Transverse colon (tissue), 4 donors: ENCODE measurements at regions of chr1 and their contacts with region 1.

Region 1: DNA sequence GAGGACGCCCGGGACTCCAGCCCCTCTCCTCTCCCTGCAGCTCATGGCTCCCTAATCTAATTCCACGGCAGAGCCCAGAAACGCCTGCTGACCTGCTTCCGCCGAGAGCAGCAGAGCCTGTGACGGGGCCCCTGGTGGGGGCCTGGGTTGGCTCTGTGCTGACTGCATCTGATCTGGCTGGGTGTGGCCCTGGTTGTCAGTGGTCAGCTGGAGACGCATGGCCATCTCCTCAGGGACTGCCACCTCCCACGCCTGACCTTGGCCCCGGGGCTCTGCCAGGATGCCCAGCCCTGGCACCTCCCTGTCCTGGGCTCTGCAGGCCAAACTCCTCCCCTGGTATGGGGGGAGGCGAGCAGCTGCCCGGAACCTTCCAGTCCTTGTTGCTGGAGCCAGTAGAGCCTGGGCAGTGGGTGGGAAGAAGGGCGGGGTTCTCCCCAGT is 1.1 kb upstream of the PLCH2 start:
- DNase-seq: no peak
- H3K4me3 ChIP-seq: no peak overlapping the region
- H3K27ac ChIP-seq: no peak overlapping the region
- H3K4me1 ChIP-seq: peaks cover 0 to 11% (median 9%) of the 10 kb centered on the region in 4 donors
- H3K27me3 ChIP-seq: peaks cover 7% of the 10 kb centered on the region
- CTCF ChIP-seq: no peak
- EP300 ChIP-seq: no peak
- POLR2A ChIP-seq: no peak

Region 2: DNA sequence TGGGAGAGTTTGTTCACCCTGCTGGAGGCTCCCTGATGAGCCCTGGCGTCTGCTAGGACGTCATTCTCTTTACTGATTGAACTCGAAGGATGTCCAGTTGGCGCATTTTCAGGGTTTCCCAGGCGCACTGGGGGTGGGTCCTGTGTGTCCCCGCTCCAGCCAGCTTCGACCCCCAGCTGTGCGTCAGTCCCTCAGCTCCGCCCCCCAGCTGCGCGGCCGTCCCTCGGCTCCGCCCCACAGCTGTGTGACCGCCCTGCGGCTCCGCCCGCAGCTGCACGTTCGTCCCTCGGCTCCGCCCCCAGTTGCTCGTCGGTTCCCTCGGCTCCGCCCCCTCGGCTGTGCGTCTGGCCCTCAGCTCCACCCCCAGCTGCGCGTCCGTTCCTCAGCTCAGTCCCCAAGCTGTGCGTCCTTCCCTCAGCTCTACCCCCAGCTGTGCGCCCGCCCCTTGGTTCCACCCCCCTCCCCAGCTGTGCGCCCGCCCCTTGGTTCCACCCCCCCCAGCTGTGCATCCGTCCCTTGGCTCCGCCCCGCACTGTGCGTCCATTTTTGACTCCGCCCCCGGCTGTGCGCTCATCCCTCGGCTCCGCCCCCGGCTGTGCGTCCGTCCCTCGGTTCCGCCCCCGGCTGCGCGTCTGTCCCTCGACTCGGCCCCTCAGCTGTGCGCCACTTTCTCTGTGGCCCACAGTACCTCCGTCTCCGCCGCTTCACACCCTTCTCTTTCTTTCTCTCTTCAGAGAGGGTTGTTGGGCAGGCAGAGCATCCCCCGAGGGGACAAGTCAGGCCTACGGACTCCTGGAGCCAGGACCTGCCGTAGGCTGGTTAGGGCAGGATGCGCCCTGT is 341.7 kb before region 1 on chr1:
- in situ Hi-C with region 1: no loop called
- intact Hi-C with region 1: no loop called
- DNase-seq: peak; percentile 99
- H3K4me3 ChIP-seq: peak overlapping the region; percentile 11 to 35 (median 28)
- H3K27ac ChIP-seq: peak overlapping the region; percentile 85 to 93 (median 89)
- H3K4me1 ChIP-seq: peaks cover 13 to 50% (median 44%) of the 10 kb centered on the region in 4 donors
- H3K27me3 ChIP-seq: no peaks in the 10 kb centered on the region
- CTCF ChIP-seq: peak in 2 of 5 experiments; percentile 12 to 27
- EP300 ChIP-seq: no peak
- POLR2A ChIP-seq: peak; percentile 25

Region 3: GRCh38 chr1:2545759-2546514 is 71.0 kb after region 1 on chr1:
- in situ Hi-C with region 1: no loop called
- intact Hi-C with region 1: loop called (anchors 5 kb)
- DNase-seq: peak; percentile 95
- H3K4me3 ChIP-seq: peak overlapping the region; percentile 37 to 57 (median 46)
- H3K27ac ChIP-seq: peak overlapping the region; percentile 95 to 96 (median 96)
- H3K4me1 ChIP-seq: peaks cover 23 to 81% (median 65%) of the 10 kb centered on the region in 4 donors
- H3K27me3 ChIP-seq: peaks cover 3% of the 10 kb centered on the region
- CTCF ChIP-seq: no peak
- EP300 ChIP-seq: no peak
- POLR2A ChIP-seq: peak; percentile 63